Adrenal gland (tissue), 19 donors: ENCODE measurements at regions of chr9 and their contacts with region 1.

Region 1: GRCh38 chr9:133640580-133641395 is 4.6 kb downstream of the DBH start:
- DNase-seq: no peak
- H3K4me3 ChIP-seq: no peak overlapping the region
- H3K27ac ChIP-seq: peak overlapping the region in 1 of 5 donors; percentile 41
- H3K4me1 ChIP-seq: no peaks in the 10 kb centered on the region
- H3K27me3 ChIP-seq: no peaks in the 10 kb centered on the region
- CTCF ChIP-seq: no peak
- POLR2A ChIP-seq: no peak

Region 2: GRCh38 chr9:133609311-133610098 is 31.3 kb before region 1 on chr9 and contains the start of gene FAM163B:
- intact Hi-C with region 1: no loop called
- DNase-seq: peak in 5 of 7 donors; percentile 35 to 57 (median 50)
- H3K4me3 ChIP-seq: peak within 1 kb of the TSS in 1 of 4 donors; percentile 47
- H3K27ac ChIP-seq: peak within 1 kb of the TSS in 1 of 5 donors; percentile 71
- H3K4me1 ChIP-seq: no peaks in the 10 kb centered on the region
- H3K27me3 ChIP-seq: peaks cover 34% of the 10 kb centered on the region
- CTCF ChIP-seq: no peak
- POLR2A ChIP-seq: peak; percentile 9 to 35
- total RNA-seq, gene FAM163B: 0.72 to 14.2 (median 1.9) TPM

Region 3: DNA sequence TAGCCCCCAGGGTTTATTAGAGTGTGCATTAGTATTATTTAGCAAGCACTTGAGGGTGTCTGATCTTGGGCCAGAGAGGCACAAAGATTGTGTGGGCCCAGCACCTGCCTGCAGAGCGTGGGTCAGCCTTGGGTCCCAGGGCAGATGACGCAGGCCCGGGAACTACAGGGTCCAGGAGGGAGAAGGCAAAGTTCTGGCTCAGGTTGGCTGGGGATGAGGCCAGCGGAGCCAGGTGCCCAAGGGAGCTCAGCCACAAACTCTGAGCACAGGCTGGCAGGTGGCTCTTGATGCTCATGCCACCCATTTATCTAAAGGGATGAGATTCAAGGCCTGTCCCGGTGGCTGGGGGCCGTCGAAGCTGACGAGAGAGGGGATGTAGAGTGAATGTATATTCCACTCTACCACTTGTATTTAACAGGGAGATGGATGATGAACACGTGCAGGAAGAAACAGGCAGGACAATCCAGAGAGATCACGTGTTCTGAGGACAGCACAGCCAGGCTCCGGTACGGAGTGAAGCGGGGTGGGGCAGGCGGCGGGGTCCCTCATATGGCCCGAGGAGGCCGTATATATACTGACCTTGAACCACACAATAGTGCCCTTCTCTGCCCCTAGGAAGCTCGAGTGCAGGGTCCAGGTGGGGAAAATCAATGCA is 1904.3 kb after region 1 on chr9:
- intact Hi-C with region 1: loop called in 1 of 2 experiments (anchors 10 kb)
- DNase-seq: no peak
- H3K4me3 ChIP-seq: no peak overlapping the region
- H3K27ac ChIP-seq: no peak overlapping the region
- H3K4me1 ChIP-seq: no peaks in the 10 kb centered on the region
- H3K27me3 ChIP-seq: no peaks in the 10 kb centered on the region
- CTCF ChIP-seq: no peak
- POLR2A ChIP-seq: no peak